ENCODE measurements at regions of chr7 and their contacts with region 1.

Region 1: DNA sequence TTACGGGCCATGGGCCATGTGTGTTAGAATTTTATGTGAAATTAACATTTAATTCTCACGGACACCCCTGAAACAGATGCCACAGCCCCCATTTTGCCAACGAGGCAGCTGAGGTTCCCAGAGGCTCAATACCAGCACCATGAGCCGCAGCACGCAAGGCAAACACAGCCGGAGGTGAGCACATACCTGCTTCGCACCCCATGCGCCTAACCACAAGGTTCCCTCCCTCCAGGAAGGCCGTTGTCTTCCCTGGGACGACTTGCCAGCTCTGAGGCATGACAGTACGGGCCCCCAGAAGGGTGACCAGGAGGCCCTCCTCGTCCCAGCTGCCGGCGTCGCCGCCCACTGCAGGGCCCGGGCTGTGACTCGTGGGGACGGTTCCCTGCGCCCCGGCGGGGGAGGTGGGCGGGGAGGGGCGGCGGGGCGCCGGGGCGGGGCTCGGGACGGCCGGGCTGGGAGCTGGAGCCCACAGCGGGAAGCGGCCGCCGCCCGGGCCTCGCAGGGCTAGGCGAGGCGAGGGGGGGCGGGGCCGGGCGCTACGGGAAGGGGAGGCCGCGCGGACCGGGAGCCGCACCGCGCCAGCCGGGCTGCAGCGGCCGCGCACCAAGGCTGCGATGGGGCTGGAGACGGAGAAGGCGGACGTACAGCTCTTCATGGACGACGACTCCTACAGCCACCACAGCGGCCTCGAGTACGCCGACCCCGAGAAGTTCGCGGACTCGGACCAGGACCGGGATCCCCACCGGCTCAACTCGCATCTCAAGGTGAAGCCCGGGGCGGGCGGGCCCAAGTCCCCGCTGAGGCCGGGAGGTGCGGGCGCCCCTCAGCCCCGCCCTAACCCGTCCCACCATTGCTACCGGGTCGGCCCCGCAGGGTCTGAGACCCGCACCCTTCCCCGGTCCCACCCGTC is at the start of gene CAV2:
- DNase-seq: peak; percentile 82 to 85
- ATAC-seq: peak; percentile 76 to 94 (median 88)
- H3K4me3 ChIP-seq: peak within 1 kb of the TSS; percentile 66 to 96 (median 84)
- H3K27ac ChIP-seq: peak within 1 kb of the TSS; percentile 92 to 100 (median 99)
- H3K4me1 ChIP-seq: peaks cover 0 to 52% (median 25%) of the 10 kb centered on the region in 9 donors
- H3K27me3 ChIP-seq: peaks cover 0 to 32% (median 0%) of the 10 kb centered on the region in 7 donors
- CTCF ChIP-seq: no peak
- total RNA-seq, gene CAV2: 196 to 277 (median 244) TPM

Region 2: GRCh38 chr7:116380025-116380424 is 119.4 kb before region 1 on chr7:
- intact Hi-C with region 1: no loop called
- DNase-seq: no peak
- ATAC-seq: peak in 5 of 8 donors; percentile 65 to 80 (median 68)
- H3K4me3 ChIP-seq: no peak overlapping the region
- H3K27ac ChIP-seq: peak overlapping the region in 2 of 10 donors; percentile 27 to 30
- H3K4me1 ChIP-seq: peaks cover 0 to 23% (median 14%) of the 10 kb centered on the region in 9 donors
- H3K27me3 ChIP-seq: no peaks in the 10 kb centered on the region
- CTCF ChIP-seq: no peak

Region 3: DNA sequence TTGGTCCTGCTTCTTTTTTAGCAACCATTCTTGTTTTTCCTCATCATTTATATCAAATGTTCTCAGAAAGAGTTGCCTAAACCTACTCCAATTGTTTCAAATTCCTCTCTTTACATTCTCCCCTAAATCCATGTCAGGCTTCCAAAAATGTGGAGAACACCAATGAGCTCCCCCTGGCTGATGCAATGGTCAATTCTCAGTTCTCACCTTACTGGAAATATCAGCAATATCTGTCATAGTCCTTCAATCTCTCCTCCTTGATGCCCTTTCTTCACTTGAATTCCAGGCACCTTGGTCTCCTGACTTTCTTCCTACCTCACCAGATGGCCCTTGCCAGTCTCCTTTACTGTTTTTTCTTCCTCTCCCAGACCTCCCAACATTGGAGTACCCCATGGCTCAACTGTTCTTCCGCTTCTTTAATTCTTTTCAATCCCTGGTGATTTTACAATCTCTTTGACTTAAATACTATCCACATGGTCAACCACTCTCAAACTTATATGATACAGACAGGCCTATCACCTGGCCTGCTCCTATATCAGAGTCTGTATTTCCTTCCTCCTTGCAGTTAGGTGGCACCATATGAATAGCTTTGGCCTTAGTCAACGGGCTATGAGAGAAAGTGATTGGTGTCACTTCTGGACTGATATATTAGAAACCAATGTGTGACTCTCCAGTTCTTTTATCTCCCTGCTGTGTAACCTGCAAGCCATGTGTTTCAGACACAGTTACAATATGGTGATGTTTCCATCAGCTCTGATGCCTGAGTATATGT is 47.3 kb before region 1 on chr7:
- intact Hi-C with region 1: loop called in 6 of 10 experiments (anchors 5 to 10 kb)
- DNase-seq: no peak
- ATAC-seq: no peak
- H3K4me3 ChIP-seq: no peak overlapping the region
- H3K27ac ChIP-seq: no peak overlapping the region
- H3K4me1 ChIP-seq: peaks cover 0 to 31% (median 7%) of the 10 kb centered on the region in 9 donors
- H3K27me3 ChIP-seq: no peaks in the 10 kb centered on the region
- CTCF ChIP-seq: peak in 2 of 9 donors; percentile 18 to 31